Calu3 (cell line): ENCODE measurements at regions of chr4 and their contacts with region 1.

Region 1: DNA sequence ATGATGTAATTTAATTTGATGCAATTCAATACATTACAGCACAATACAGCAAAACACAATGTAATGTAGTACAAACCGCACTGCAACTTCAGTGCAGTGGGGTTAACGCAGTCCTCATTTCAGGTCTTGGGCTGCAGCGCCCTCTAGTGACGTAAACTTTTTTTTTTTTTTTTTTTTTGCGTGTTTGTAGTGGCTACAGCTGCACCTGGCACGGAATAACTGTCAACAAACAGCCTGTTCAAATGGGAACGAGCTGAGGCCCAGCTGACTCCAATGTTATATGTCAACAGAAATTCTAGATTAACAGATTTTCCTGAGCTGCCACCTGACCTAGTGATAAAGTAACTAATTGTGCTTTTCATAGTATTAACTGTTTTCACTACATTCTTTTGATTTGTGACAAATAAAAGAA is 33.5 kb upstream of the RASSF6 start:
- DNase-seq: no peak
- H3K4me3 Mint-ChIP-seq: no peak overlapping the region
- H3K27ac Mint-ChIP-seq: no peak overlapping the region
- H3K4me1 Mint-ChIP-seq: peaks cover 23% of the 10 kb centered on the region
- H3K27me3 Mint-ChIP-seq: no peaks in the 10 kb centered on the region
- CTCF ChIP-seq: peak; percentile 54

Region 2: DNA sequence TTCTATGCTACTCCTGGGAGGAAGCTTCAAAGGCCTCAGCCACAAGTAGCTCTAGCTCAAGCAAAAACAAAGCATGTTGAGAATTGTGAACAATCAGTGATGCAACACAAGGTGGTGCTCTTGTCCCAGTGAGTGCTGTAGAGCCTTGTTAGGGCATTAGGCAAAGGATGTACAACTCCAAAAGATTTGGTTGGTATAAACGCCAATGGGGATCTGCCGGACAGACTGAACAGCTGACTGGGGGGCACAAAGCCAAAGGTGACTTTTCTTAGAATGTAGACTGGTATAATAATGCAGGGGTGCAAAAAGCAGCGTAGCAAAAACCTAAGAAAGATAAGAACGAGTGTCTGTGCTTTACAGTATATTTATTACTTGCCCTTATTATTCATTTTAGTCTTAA is 312.2 kb before region 1 on chr4:
- CTCF ChIA-PET with region 1: interaction called, 3 read pairs
- intact Hi-C with region 1: loop called (anchors 5 kb)
- DNase-seq: peak; percentile 35
- H3K4me3 Mint-ChIP-seq: no peak overlapping the region
- H3K27ac Mint-ChIP-seq: no peak overlapping the region
- H3K4me1 Mint-ChIP-seq: peaks cover 14% of the 10 kb centered on the region
- H3K27me3 Mint-ChIP-seq: no peaks in the 10 kb centered on the region
- CTCF ChIP-seq: no peak

Region 3: GRCh38 chr4:73446336-73446938 is 207.3 kb before region 1 on chr4:
- CTCF ChIA-PET with region 1: no interaction called
- intact Hi-C with region 1: loop called (anchors 10 kb)
- DNase-seq: peak; percentile 17
- H3K4me3 Mint-ChIP-seq: no peak overlapping the region
- H3K27ac Mint-ChIP-seq: no peak overlapping the region
- H3K4me1 Mint-ChIP-seq: peaks cover 5% of the 10 kb centered on the region
- H3K27me3 Mint-ChIP-seq: no peaks in the 10 kb centered on the region
- CTCF ChIP-seq: peak; percentile 65

Region 4: GRCh38 chr4:73573794-73574406 is 79.8 kb before region 1 on chr4:
- CTCF ChIA-PET with region 1: interaction called, 8 read pairs
- intact Hi-C with region 1: loop called (anchors 2 kb)
- DNase-seq: peak; percentile 70
- H3K4me3 Mint-ChIP-seq: no peak overlapping the region
- H3K27ac Mint-ChIP-seq: no peak overlapping the region
- H3K4me1 Mint-ChIP-seq: no peaks in the 10 kb centered on the region
- H3K27me3 Mint-ChIP-seq: no peaks in the 10 kb centered on the region
- CTCF ChIP-seq: peak; percentile 71

Region 5: GRCh38 chr4:73593631-73594241 is 60.0 kb before region 1 on chr4:
- CTCF ChIA-PET with region 1: interaction called, 5 read pairs
- intact Hi-C with region 1: loop called (anchors 1 kb)
- DNase-seq: no peak
- H3K4me3 Mint-ChIP-seq: no peak overlapping the region
- H3K27ac Mint-ChIP-seq: no peak overlapping the region
- H3K4me1 Mint-ChIP-seq: peaks cover 21% of the 10 kb centered on the region
- H3K27me3 Mint-ChIP-seq: no peaks in the 10 kb centered on the region
- CTCF ChIP-seq: no peak

Region 6: DNA sequence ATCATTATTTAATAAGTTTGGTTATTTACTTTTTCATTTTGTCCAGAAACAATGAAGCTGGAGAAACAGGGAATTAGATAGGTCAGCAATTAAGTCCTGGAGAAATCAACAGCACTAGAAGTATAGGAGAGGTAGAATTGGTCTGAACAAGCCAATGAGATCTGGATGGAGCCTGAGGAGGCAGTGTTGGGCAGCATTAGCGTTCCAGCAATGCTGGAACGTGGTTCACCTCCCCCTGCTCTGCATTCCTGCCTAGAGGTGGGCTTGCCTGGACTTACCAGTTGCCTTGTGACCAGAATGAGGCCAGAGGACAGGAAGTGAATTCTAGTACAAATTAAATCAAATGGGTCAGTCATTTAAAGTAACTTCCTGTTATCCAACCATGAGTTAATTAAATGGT is 38.1 kb before region 1 on chr4:
- CTCF ChIA-PET with region 1: no interaction called
- intact Hi-C with region 1: loop called (anchors 5 kb)
- DNase-seq: peak; percentile 59
- H3K4me3 Mint-ChIP-seq: peak overlapping the region; percentile 18
- H3K27ac Mint-ChIP-seq: peak overlapping the region; percentile 88
- H3K4me1 Mint-ChIP-seq: peaks cover 46% of the 10 kb centered on the region
- H3K27me3 Mint-ChIP-seq: no peaks in the 10 kb centered on the region
- CTCF ChIP-seq: no peak

Region 7: DNA sequence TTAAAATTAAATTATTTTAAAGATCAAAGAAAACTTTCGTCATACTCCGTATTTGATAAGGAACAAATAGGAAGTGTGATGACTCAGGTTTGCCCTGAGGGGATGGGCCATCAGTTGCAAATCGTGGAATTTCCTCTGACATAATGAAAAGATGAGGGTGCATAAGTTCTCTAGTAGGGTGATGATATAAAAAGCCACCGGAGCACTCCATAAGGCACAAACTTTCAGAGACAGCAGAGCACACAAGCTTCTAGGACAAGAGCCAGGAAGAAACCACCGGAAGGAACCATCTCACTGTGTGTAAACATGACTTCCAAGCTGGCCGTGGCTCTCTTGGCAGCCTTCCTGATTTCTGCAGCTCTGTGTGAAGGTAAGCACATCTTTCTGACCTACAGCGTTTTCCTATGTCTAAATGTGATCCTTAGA is 86.7 kb after region 1 on chr4 and contains the start of gene CXCL8:
- CTCF ChIA-PET with region 1: no interaction called
- intact Hi-C with region 1: no loop called
- DNase-seq: peak; percentile 77
- H3K4me3 Mint-ChIP-seq: peak within 1 kb of the TSS; percentile 64
- H3K27ac Mint-ChIP-seq: peak within 1 kb of the TSS; percentile 99
- H3K4me1 Mint-ChIP-seq: peaks cover 17% of the 10 kb centered on the region
- H3K27me3 Mint-ChIP-seq: no peaks in the 10 kb centered on the region
- CTCF ChIP-seq: no peak
- total RNA-seq, gene CXCL8: 222 and 404 TPM in 2 replicates